ENCODE measurements at regions of chr12 and their contacts with region 1.

Region 1: DNA sequence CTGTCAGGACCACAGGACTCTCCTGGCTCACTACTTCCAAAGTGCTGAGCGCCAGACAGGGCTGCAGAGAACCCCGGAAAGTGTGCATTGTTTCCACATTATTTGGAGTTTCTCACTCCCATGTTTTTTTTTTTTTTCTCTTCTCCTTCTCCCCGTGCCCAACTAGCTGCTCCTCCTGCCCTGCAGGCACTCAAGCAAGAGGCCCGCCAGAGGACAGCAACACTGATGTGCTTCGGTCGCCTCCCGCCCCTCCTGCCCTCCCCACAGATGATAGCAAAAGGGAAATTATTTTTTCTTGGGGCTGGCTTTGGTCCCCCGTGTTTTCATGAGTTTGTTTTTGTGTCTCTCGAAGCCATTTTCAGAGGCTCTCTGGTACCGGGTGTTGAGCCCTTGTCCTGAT is 98.6 kb downstream of the DUSP16 start:
- DNase-seq: no peak
- H3K4me3 ChIP-seq: no peak overlapping the region
- CTCF ChIP-seq: no peak
- POLR2A ChIP-seq: no peak

Region 2: DNA sequence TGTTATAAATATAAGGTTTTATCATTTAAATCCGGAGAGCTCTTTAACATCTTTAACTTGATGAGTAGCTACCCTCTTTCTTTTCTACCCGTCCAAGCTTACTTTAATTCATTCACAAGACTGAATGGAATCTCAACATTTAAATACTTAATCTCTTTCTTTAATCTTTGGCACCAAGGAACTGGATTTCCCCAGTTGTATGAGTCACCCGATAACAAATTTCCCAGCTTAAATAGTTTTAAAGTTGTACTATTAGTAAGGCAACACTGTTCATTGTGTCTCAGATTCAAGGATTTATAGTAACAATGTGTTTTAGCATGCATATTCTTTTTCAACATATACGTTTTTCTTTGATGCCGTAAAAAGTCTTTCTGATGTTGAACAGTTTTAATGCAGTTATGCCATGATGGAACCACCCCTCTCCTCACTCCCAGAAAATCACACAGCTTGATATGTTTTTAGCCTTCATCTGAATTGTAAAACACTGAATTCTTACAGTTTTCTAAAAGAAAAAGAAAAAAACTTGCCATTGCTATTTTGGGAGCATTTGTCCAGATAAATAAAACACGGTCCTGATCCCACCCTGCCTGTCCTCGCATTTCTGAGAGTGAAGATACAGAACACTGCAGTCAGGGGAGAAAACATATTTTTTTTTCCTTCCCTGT is 181.2 kb before region 1 on chr12:
- intact Hi-C with region 1: no loop called
- DNase-seq: no peak
- H3K4me3 ChIP-seq: no peak overlapping the region
- CTCF ChIP-seq: no peak
- POLR2A ChIP-seq: no peak

Region 3: GRCh38 chr12:12432364-12432763 is 31.7 kb before region 1 on chr12:
- intact Hi-C with region 1: loop called (anchors 1 kb)
- DNase-seq: no peak
- H3K4me3 ChIP-seq: no peak overlapping the region
- CTCF ChIP-seq: no peak
- POLR2A ChIP-seq: no peak

Measured in lower leg skin (tissue), 4 donors.